Activated naive CD4-positive, alpha-beta T cell treated with anti-CD3 and anti-CD28 coated beads for 36 hours (primary cell): ENCODE measurements at regions of chr4 and their contacts with region 1.

Region 1: DNA sequence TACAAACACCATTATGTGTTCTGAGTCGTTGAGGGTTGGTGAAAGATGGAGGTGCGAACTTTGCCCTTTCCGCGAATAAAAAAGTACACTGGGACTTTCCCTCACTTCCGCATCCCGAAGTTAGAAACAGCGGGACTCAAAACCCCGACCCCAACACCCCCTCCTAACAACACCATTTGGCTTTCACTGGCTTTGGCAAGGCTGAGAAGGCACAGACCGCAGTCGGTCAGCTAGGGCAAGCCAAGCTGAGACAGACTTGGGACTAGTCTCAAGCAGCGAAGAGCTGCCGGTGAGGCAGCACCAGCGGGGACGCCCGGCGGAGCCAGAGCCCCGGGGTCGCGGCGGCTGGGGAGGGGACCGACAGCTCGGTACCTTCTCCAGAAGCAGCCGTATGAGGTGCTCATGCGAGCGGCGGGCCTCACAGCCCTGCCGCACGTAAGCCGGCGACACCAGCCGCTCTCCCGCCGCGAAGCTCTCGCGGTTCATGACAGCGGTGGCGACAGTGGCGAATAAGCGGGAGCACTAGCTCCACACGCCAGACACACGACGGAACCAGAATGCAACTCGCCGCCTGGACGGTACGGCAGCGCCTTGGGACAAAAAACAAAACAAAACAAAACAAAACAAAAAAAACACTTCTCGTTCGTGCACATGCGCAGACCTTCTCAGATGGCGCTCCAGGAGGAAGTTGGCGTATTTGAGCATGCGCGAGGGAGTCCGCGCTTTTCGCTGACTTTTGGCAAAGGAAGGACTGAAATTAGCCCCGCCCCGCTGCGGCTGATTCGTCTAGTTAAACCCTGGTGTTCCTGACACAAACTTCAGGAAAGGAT is at the start of gene SEPSECS:
- DNase-seq: peak; percentile 97
- H3K4me3 Mint-ChIP-seq: peak within 1 kb of the TSS; percentile 93
- H3K27ac Mint-ChIP-seq: peak within 1 kb of the TSS; percentile 99
- H3K4me1 Mint-ChIP-seq: peaks cover 34% of the 10 kb centered on the region
- H3K27me3 Mint-ChIP-seq: no peaks in the 10 kb centered on the region
- total RNA-seq, gene SEPSECS: 14.7 to 17.9 TPM

Region 2: DNA sequence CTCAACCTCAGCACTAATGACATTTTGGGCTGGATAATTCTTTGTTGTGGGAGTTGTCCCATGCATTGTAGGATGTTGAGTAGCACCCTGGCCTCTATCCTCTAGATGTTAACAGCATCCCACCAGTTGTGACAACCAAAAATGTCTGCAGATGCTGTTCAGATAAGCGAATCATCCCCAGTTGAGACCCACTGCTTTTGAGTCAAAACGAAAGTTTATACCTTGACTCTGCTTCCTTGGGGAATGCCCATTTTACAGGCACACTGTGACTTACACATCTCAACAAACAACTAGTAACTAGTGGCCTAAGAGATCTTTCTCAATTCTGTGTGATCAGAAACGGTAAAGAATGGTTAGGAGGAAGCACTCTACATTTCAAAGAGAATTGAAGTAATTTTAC is 36.9 kb before region 1 on chr4:
- CTCF ChIA-PET with region 1: interaction called, 4 read pairs
- intact Hi-C with region 1: loop called (anchors 1 kb)
- DNase-seq: peak; percentile 51
- H3K4me3 Mint-ChIP-seq: no peak overlapping the region
- H3K27ac Mint-ChIP-seq: no peak overlapping the region
- H3K4me1 Mint-ChIP-seq: peaks cover 12% of the 10 kb centered on the region
- H3K27me3 Mint-ChIP-seq: no peaks in the 10 kb centered on the region

Region 3: GRCh38 chr4:25234390-25235370 is 74.6 kb after region 1 on chr4:
- CTCF ChIA-PET with region 1: interaction called, 6 read pairs
- intact Hi-C with region 1: loop called (anchors 1 kb)
- DNase-seq: peak; percentile 63
- H3K4me3 Mint-ChIP-seq: peak overlapping the region; percentile 92
- H3K27ac Mint-ChIP-seq: peak overlapping the region; percentile 91
- H3K4me1 Mint-ChIP-seq: peaks cover 40% of the 10 kb centered on the region
- H3K27me3 Mint-ChIP-seq: no peaks in the 10 kb centered on the region

Region 4: GRCh38 chr4:25376754-25377571 is 216.9 kb after region 1 on chr4 and contains the start of gene ANAPC4:
- CTCF ChIA-PET with region 1: interaction called, 5 read pairs
- intact Hi-C with region 1: loop called (anchors 1 kb)
- DNase-seq: peak; percentile 95
- H3K4me3 Mint-ChIP-seq: no peak within 1 kb of the TSS
- H3K27ac Mint-ChIP-seq: peak within 1 kb of the TSS; percentile 78
- H3K4me1 Mint-ChIP-seq: peaks cover 9% of the 10 kb centered on the region
- H3K27me3 Mint-ChIP-seq: no peaks in the 10 kb centered on the region
- total RNA-seq, gene ANAPC4: 23.1 to 27.3 TPM

Region 5: GRCh38 chr4:25913851-25914669 is 754.0 kb after region 1 on chr4 and contains the start of gene SMIM20:
- CTCF ChIA-PET with region 1: no interaction called
- intact Hi-C with region 1: loop called (anchors 1 kb)
- DNase-seq: peak; percentile 89
- H3K4me3 Mint-ChIP-seq: peak within 1 kb of the TSS; percentile 96
- H3K27ac Mint-ChIP-seq: peak within 1 kb of the TSS; percentile 97
- H3K4me1 Mint-ChIP-seq: peaks cover 17% of the 10 kb centered on the region
- H3K27me3 Mint-ChIP-seq: no peaks in the 10 kb centered on the region
- total RNA-seq, gene SMIM20: 28.1 to 33.2 TPM

Region 6: GRCh38 chr4:26619784-26620183 is 1459.7 kb after region 1 on chr4:
- CTCF ChIA-PET with region 1: no interaction called
- intact Hi-C with region 1: no loop called
- DNase-seq: no peak
- H3K4me3 Mint-ChIP-seq: no peak overlapping the region
- H3K27ac Mint-ChIP-seq: no peak overlapping the region
- H3K4me1 Mint-ChIP-seq: no peaks in the 10 kb centered on the region
- H3K27me3 Mint-ChIP-seq: no peaks in the 10 kb centered on the region